Right cardiac atrium (tissue), 5 donors: ENCODE measurements at regions of chr1 and their contacts with region 1.

Region 1: DNA sequence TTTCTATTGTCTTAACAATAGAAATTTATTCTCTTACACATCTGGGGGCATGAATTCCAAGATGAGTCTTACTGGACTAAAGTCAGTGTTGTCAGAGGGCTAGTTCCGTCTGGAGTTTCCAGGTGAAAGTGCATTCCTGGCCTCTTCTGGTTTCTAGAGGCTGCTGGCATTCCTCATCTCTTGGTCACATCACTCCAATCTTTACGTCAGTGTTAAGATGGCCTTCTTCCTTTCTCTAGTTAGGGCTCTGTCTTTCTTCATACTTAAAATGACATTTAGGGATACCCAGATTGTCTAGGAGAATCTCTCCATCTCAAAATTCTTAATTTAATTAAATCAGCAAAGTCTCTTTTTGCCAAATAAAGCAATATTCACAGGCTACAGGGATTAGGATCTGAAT is 13.3 kb upstream of the PDC start:
- DNase-seq: no peak
- ATAC-seq: no peak
- H3K4me3 ChIP-seq: no peak overlapping the region
- H3K27ac ChIP-seq: no peak overlapping the region
- H3K4me1 ChIP-seq: no peaks in the 10 kb centered on the region
- H3K27me3 ChIP-seq: no peaks in the 10 kb centered on the region

Region 2: GRCh38 chr1:186009039-186009737 is 465.0 kb before region 1 on chr1:
- intact Hi-C with region 1: no loop called
- DNase-seq: no peak
- ATAC-seq: peak in 1 of 2 donors; percentile 91
- H3K4me3 ChIP-seq: no peak overlapping the region
- H3K27ac ChIP-seq: no peak overlapping the region
- H3K4me1 ChIP-seq: no peaks in the 10 kb centered on the region
- H3K27me3 ChIP-seq: no peaks in the 10 kb centered on the region

Region 3: DNA sequence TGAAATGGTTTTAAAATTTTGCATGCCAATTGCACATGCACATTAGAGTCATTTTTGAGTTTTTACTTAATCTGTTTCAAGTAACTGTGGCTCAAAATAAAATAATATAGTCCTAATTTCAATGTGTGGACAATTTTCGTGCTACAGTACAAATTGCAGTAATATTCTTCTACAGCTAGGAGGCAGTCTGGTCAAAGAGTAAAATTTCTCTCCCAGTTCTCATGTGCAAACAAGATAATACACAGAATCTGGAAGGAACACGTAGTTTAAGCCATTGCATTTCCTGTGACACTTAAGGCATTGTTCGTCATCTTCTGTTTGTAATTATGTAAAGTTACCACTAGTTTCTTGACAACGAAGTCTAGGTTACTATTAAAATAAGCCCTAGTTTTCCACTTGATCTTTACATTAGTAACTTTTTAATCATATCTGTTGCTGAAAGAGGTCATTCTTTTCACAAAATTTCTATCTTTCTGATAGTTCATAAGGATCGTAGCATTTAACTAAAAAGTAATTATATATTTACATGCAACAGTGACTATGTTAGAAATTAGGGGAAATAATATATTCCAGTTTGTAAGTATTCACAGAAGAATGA is 69.7 kb before region 1 on chr1:
- intact Hi-C with region 1: loop called in 1 of 4 experiments (anchors 10 kb)
- DNase-seq: no peak
- ATAC-seq: peak; percentile 51 to 64
- H3K4me3 ChIP-seq: no peak overlapping the region
- H3K27ac ChIP-seq: no peak overlapping the region
- H3K4me1 ChIP-seq: no peaks in the 10 kb centered on the region
- H3K27me3 ChIP-seq: no peaks in the 10 kb centered on the region

Region 4: DNA sequence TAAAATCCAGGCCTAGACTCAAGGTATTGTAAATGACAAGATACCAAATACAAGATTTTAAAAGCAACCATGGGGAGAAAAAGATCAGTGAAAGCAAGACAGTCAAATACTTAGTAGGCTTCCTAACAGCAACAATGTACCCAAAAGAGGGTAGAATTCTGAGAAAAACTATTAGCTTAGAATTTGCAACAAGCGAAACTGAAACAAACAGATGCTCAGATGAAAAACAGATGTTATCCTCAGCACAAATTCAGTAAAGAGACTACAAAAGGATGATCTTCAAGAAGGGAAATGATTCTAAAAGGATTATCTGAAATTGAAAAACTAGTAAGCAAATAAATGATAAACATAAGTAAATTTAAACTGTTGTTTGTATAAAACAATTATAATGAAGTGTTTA is 53.3 kb before region 1 on chr1:
- intact Hi-C with region 1: no loop called
- DNase-seq: no peak
- ATAC-seq: no peak
- H3K4me3 ChIP-seq: no peak overlapping the region
- H3K27ac ChIP-seq: no peak overlapping the region
- H3K4me1 ChIP-seq: no peaks in the 10 kb centered on the region
- H3K27me3 ChIP-seq: no peaks in the 10 kb centered on the region

Region 5: GRCh38 chr1:186518822-186519381 is 44.7 kb after region 1 on chr1:
- intact Hi-C with region 1: no loop called
- DNase-seq: no peak
- ATAC-seq: no peak
- H3K4me3 ChIP-seq: no peak overlapping the region
- H3K27ac ChIP-seq: no peak overlapping the region
- H3K4me1 ChIP-seq: no peaks in the 10 kb centered on the region
- H3K27me3 ChIP-seq: no peaks in the 10 kb centered on the region

Region 6: GRCh38 chr1:186559601-186560116 is 85.5 kb after region 1 on chr1:
- intact Hi-C with region 1: no loop called
- DNase-seq: no peak
- ATAC-seq: no peak
- H3K4me3 ChIP-seq: no peak overlapping the region
- H3K27ac ChIP-seq: no peak overlapping the region
- H3K4me1 ChIP-seq: no peaks in the 10 kb centered on the region
- H3K27me3 ChIP-seq: no peaks in the 10 kb centered on the region